Endothelial cell of umbilical vein (primary cell): ENCODE measurements at regions of chr11 and their contacts with region 1.

Region 1: GRCh38 chr11:62573592-62574362 is at the start of gene EEF1G:
- DNase-seq: peak; percentile 100
- H3K4me3 ChIP-seq: peak within 1 kb of the TSS; percentile 51 to 85 (median 70)
- H3K27ac ChIP-seq: peak within 1 kb of the TSS; percentile 99
- H3K4me1 ChIP-seq: peaks cover 59% of the 10 kb centered on the region
- H3K27me3 ChIP-seq: no peaks in the 10 kb centered on the region
- CTCF ChIP-seq: no peak
- POLR2A ChIP-seq: peak; percentile 96
- total RNA-seq, gene EEF1G: 1,341 and 1,345 TPM in 2 replicates

Region 2: DNA sequence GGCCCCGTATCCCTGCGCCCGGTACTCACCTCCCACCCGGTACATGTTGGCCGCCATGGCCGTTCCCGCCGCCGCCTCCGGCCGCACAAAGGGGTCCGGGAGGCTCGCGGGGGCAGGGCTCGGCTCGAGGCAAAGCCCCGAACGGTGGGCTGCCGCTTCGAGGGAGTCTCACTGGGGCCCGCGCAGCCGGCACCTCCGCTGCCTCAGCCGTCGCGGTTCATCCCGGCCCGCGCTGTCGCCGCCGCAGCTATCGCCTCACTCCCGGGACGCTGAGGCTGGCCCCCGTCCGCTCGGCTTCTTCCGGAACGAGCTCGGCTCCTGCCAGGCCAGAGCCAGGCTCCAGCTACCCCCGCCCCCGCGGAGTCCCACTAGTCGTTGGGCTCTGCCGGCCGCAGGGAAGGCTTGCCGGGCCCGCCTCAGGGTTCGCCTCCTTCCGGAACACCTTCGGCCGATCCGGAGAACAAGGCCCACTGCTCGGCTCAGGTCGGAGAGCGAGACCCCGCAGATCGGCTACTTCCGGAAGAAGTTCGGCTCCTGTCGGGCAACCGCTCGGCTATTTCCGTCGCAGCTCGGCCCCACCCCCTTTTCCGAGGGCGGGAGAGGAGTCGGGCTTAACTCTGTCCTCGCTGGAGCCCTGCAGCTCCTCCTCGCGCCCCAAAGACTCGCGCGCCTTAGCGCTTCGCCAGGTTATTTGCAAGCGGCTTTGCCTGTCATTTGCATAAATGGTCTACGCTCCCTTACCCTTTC is 27.8 kb after region 1 on chr11 and contains the start of gene MTA2:
- CTCF ChIA-PET with region 1: interaction called, 6 read pairs
- POLR2A ChIA-PET with region 1: interaction called, 5 read pairs
- dilution Hi-C with region 1: no loop called
- intact Hi-C with region 1: loop called (anchors 1 kb)
- DNase-seq: peak; percentile 99
- H3K4me3 ChIP-seq: peak within 1 kb of the TSS; percentile 61 to 98 (median 92)
- H3K27ac ChIP-seq: peak within 1 kb of the TSS; percentile 54
- H3K4me1 ChIP-seq: peaks cover 19% of the 10 kb centered on the region
- H3K27me3 ChIP-seq: no peaks in the 10 kb centered on the region
- CTCF ChIP-seq: no peak
- POLR2A ChIP-seq: peak; percentile 75
- total RNA-seq, gene MTA2: 166 and 176 TPM in 2 replicates

Region 3: DNA sequence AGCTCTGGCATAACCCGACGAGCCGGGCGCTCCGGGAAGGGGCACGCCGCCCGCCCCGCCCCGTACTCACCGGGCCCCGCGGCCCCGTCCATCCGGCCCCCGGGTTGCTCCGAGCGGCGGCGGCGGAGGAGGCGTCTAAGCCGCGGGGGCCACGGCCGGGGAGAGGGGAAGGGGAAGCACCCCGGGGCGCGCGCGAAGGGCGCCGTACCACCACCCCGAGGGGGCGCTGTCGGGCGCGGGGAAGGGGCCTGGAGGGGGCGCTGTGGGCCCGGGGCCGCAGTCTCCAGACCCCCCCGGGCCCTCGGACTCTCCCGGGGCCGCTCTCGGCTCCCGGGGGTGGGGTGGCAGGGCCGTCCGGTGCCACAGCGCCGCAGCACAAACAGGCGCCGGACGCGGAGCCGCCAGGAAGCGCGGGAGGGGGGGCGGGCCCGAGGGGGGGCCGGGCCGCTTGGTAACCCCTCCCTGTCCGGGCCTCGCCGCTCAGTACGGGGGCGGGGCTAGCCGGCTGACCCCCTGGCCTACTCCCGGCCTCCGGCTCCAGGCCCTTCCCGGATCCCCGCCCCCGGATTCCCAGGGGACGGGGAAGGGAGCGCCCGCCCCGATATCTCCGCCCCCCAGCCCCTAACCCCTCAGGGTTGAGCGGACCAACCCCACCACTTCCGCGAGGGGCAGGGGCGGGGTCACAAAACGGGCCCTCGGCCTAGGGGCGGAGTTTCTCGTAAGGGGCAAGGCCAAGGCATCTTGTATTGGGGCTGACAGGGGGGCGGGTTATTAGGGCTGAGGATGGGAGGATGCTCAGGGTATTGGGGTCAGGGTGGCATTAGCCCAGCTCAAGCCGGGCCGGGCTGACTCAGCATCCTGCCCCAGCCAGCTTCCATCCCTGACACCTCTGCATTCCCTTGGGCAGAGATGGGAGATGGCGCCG is 38.9 kb after region 1 on chr11 and contains the starts of genes EML3 and ROM1:
- CTCF ChIA-PET with region 1: interaction called, 10 read pairs
- POLR2A ChIA-PET with region 1: interaction called, 4 read pairs
- dilution Hi-C with region 1: no loop called
- intact Hi-C with region 1: loop called (anchors 1 kb)
- DNase-seq: peak; percentile 80
- H3K4me3 ChIP-seq: peak within 1 kb of the TSS; percentile 61 to 74 (median 67)
- H3K27ac ChIP-seq: peak within 1 kb of the TSS; percentile 30
- H3K4me1 ChIP-seq: peaks cover 22% of the 10 kb centered on the region
- H3K27me3 ChIP-seq: no peaks in the 10 kb centered on the region
- CTCF ChIP-seq: peak; percentile 88 to 89
- POLR2A ChIP-seq: peak; percentile 41
- total RNA-seq, gene EML3: 101 and 110 TPM in 2 replicates
- total RNA-seq, gene ROM1: 8.2 and 8.8 TPM in 2 replicates